ENCODE measurements at regions of chr1 and their contacts with region 1.

Region 1: DNA sequence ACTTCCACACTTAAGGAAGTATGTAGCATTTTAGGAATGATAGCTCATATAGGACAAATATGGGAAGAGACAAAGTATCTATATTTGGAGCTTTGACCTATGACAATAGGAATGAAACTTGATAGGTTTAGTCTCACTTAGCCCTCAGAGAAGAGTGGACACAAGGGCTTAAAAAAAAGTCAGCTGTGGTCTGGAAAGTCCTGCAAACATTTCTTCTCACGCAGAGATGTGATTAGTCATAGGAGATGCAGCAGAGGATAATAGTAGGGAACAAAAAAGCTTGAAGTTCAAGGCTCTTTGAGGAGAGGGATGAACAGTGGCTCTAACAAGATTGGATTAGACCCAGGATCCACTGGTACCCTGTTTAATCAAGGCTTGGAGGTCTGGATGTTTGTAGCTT is 14.8 kb upstream of the RNF220 start:
- DNase-seq: no peak
- ATAC-seq: no peak
- H3K4me3 ChIP-seq: no peak overlapping the region
- H3K27ac ChIP-seq: no peak overlapping the region
- H3K4me1 ChIP-seq: peaks cover 0 to 6% of the 10 kb centered on the region in 2 experiments; a peak in 1 of 4 replicates
- H3K27me3 ChIP-seq: no peaks in the 10 kb centered on the region
- CTCF ChIP-seq: no peak
- POLR2A ChIP-seq: no peak
- RAD21 ChIP-seq: no peak

Region 2: GRCh38 chr1:43844114-43844513 is 546.2 kb before region 1 on chr1:
- CTCF ChIA-PET with region 1: no interaction called
- POLR2A ChIA-PET with region 1: no interaction called
- RAD21 ChIA-PET with region 1: no interaction called
- intact Hi-C with region 1: no loop called
- DNase-seq: no peak
- ATAC-seq: no peak
- H3K4me3 ChIP-seq: no peak overlapping the region
- H3K27ac ChIP-seq: no peak overlapping the region
- H3K4me1 ChIP-seq: peaks cover 0 to 6% of the 10 kb centered on the region in 2 experiments; a peak in 2 of 4 replicates
- H3K27me3 ChIP-seq: no peaks in the 10 kb centered on the region
- CTCF ChIP-seq: no peak
- POLR2A ChIP-seq: no peak
- RAD21 ChIP-seq: no peak

Region 3: GRCh38 chr1:43974443-43975248 is 415.6 kb before region 1 on chr1 and contains the start of gene ATP6V0B:
- CTCF ChIA-PET with region 1: no interaction called
- POLR2A ChIA-PET with region 1: no interaction called
- RAD21 ChIA-PET with region 1: no interaction called
- intact Hi-C with region 1: no loop called
- DNase-seq: peak; percentile 87
- ATAC-seq: peak; percentile 74
- H3K4me3 ChIP-seq: peak within 1 kb of the TSS; percentile 92 to 99
- H3K27ac ChIP-seq: peak within 1 kb of the TSS; percentile 80
- H3K4me1 ChIP-seq: peaks cover 22 to 59% of the 10 kb centered on the region in 2 experiments
- H3K27me3 ChIP-seq: no peaks in the 10 kb centered on the region
- CTCF ChIP-seq: no peak
- POLR2A ChIP-seq: peak; percentile 84
- RAD21 ChIP-seq: no peak
- total RNA-seq, gene ATP6V0B: 122 TPM

Region 4: GRCh38 chr1:44347280-44347679 is 43.0 kb before region 1 on chr1:
- CTCF ChIA-PET with region 1: no interaction called
- POLR2A ChIA-PET with region 1: no interaction called
- RAD21 ChIA-PET with region 1: no interaction called
- intact Hi-C with region 1: no loop called
- DNase-seq: no peak
- ATAC-seq: no peak
- H3K4me3 ChIP-seq: no peak overlapping the region
- H3K27ac ChIP-seq: no peak overlapping the region
- H3K4me1 ChIP-seq: no peaks in the 10 kb centered on the region
- H3K27me3 ChIP-seq: no peaks in the 10 kb centered on the region
- CTCF ChIP-seq: no peak
- POLR2A ChIP-seq: no peak
- RAD21 ChIP-seq: no peak

Region 5: GRCh38 chr1:44377925-44378784 is 12.1 kb before region 1 on chr1:
- CTCF ChIA-PET with region 1: interaction called, 22 read pairs
- POLR2A ChIA-PET with region 1: no interaction called
- RAD21 ChIA-PET with region 1: no interaction called
- intact Hi-C with region 1: no loop called
- DNase-seq: peak; percentile 32
- ATAC-seq: peak; percentile 88
- H3K4me3 ChIP-seq: no peak overlapping the region
- H3K27ac ChIP-seq: no peak overlapping the region
- H3K4me1 ChIP-seq: no peaks in the 10 kb centered on the region
- H3K27me3 ChIP-seq: no peaks in the 10 kb centered on the region
- CTCF ChIP-seq: peak; percentile 80 to 86 (median 80)
- POLR2A ChIP-seq: no peak
- RAD21 ChIP-seq: peak; percentile 90

Measured in HCT116 (cell line).